ENCODE measurements at regions of chr11 and their contacts with region 1.

Region 1: DNA sequence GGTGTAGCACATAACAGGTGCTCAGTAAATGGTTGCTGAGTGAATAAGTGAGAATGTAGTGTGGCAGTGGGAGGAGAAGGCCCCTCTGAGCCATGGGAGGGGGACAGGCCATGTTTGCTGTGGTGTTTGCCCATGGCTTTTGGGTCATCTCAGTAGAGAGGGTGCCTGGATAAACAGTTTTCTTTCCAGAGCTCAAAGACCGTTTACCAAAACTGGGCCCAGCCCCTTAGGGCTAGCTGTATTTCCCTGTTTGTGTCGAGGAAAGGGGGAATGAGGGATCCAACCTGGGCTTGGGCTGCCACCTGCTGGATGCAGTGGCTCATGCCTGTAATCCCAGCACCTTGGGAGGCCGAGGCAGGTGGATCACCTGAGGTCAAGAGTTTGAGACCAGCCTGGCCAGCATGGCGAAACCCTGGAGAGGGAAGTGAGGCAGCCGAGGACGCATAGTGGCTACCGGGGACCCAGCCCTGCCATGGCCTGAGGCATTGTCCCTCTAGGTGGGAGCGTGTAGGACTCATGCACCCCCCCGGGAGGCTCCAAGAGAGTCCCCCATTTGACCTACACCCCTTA is 8.7 kb upstream of the LTO1 start:
- DNase-seq: no peak
- ATAC-seq: no peak

Region 2: GRCh38 chr11:69801519-69802335 is 117.9 kb after region 1 on chr11:
- intact Hi-C with region 1: loop called (anchors 10 kb)
- DNase-seq: no peak
- ATAC-seq: no peak

Region 3: DNA sequence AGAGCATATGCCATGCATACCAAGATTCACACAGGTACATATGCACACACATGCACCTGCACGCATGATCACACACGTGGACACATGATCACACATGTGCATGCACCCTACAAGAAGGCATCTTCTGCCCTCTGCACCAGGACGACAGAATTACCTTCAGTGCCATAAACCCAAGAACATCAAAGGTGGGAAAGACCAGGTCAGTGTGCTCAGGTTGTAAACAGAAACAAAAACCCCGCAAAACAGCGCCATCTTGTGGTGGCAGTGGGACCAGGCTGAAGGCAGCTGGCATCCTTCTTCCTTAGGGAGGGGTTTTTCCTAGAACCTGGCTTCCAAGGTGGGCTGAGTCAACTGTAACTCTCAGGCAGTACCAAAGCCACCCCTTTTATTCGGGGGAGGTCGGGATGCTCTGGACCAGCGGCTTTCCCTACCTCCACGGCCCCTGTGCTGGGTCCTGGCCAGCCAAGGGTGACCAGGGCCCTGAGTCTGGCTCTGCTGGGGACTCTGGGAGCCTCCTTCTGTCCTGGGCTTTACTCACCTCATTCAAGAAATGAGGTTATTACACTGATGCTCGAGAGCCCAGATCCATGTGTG is 204.7 kb after region 1 on chr11:
- intact Hi-C with region 1: loop called (anchors 1 kb)
- DNase-seq: no peak
- ATAC-seq: peak; percentile 24

Measured in Right ventricle myocardium inferior (tissue), 1 donor.